Left lung (tissue), 14 donors: ENCODE measurements at regions of chr9 and their contacts with region 1.

Region 1: GRCh38 chr9:37913480-37914153 is 9.7 kb upstream of the SLC25A51 start:
- DNase-seq: peak in 3 of 4 donors; percentile 76 to 87 (median 77)
- ATAC-seq: peak; percentile 87
- H3K4me3 ChIP-seq: no peak overlapping the region
- H3K27ac ChIP-seq: no peak overlapping the region
- H3K4me1 ChIP-seq: peaks cover 5 to 44% of the 10 kb centered on the region in 2 donors
- H3K27me3 ChIP-seq: no peaks in the 10 kb centered on the region
- CTCF ChIP-seq: peak; percentile 97 to 98

Region 2: GRCh38 chr9:38088006-38088925 is 174.6 kb after region 1 on chr9:
- intact Hi-C with region 1: loop called in 1 of 2 experiments (anchors 10 kb)
- DNase-seq: peak; percentile 34 to 93 (median 66)
- ATAC-seq: peak; percentile 95
- H3K4me3 ChIP-seq: no peak overlapping the region
- H3K27ac ChIP-seq: no peak overlapping the region
- H3K4me1 ChIP-seq: peaks cover 0 to 20% of the 10 kb centered on the region in 2 donors
- H3K27me3 ChIP-seq: no peaks in the 10 kb centered on the region
- CTCF ChIP-seq: peak; percentile 94 to 97

Region 3: GRCh38 chr9:38160613-38161215 is 247.1 kb after region 1 on chr9:
- intact Hi-C with region 1: loop called in 1 of 2 experiments (anchors 5 kb)
- DNase-seq: peak in 2 of 4 donors; percentile 48 to 57
- ATAC-seq: peak; percentile 81
- H3K4me3 ChIP-seq: no peak overlapping the region
- H3K27ac ChIP-seq: no peak overlapping the region
- H3K4me1 ChIP-seq: no peaks in the 10 kb centered on the region
- H3K27me3 ChIP-seq: no peaks in the 10 kb centered on the region
- CTCF ChIP-seq: peak; percentile 74 to 84

Region 4: DNA sequence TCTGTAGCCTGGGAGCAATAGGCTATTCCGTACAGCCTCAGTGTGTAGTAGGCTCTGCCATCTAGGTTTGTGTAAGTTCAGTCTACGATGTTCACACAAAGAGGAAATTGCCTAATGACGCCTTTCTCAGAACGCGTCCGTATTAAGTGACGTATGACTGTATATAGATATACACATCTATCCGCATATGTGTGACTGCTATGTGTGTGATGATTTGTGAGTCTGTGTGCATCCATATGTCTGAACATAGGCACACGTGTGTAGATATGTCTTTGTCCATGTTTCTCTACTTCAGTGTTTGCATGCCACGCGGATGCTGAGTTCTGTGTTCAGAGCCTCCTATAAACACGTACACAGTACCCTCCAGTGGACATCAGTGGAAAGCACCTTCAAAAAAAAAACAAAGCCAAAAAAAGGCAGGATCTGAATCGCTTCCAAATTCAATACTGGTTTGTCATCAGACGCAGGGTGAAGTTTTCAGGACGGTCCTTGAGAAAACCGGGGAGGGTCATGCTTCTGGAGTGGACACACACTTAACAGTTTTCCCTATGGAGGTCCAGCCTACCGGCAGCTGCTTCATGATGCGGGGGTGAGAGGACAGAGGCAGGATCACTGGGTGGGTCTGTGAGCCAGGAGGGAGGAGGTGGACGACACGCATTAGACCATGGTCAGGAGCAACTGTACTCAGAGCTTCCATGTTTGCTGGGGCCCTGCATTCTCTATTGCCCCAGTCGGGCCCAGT is 449.4 kb after region 1 on chr9:
- intact Hi-C with region 1: loop called in 1 of 2 experiments (anchors 10 kb)
- DNase-seq: peak in 3 of 4 donors; percentile 20 to 79 (median 61)
- ATAC-seq: peak; percentile 93
- H3K4me3 ChIP-seq: no peak overlapping the region
- H3K27ac ChIP-seq: no peak overlapping the region
- H3K4me1 ChIP-seq: peaks cover 3 to 10% of the 10 kb centered on the region in 2 donors
- H3K27me3 ChIP-seq: no peaks in the 10 kb centered on the region
- CTCF ChIP-seq: peak in 1 of 2 donors; percentile 25